ENCODE measurements at regions of chr7 and their contacts with region 1.

Region 1: GRCh38 chr7:150404805-150405583 is 25.9 kb downstream of the ZNF775 start:
- DNase-seq: peak; percentile 80
- ATAC-seq: peak; percentile 21
- H3K4me3 Mint-ChIP-seq: peak overlapping the region; percentile 76
- H3K27ac Mint-ChIP-seq: peak overlapping the region; percentile 99
- H3K4me1 Mint-ChIP-seq: peaks cover 65% of the 10 kb centered on the region
- H3K27me3 Mint-ChIP-seq: no peaks in the 10 kb centered on the region
- CTCF ChIP-seq: no peak

Region 2: DNA sequence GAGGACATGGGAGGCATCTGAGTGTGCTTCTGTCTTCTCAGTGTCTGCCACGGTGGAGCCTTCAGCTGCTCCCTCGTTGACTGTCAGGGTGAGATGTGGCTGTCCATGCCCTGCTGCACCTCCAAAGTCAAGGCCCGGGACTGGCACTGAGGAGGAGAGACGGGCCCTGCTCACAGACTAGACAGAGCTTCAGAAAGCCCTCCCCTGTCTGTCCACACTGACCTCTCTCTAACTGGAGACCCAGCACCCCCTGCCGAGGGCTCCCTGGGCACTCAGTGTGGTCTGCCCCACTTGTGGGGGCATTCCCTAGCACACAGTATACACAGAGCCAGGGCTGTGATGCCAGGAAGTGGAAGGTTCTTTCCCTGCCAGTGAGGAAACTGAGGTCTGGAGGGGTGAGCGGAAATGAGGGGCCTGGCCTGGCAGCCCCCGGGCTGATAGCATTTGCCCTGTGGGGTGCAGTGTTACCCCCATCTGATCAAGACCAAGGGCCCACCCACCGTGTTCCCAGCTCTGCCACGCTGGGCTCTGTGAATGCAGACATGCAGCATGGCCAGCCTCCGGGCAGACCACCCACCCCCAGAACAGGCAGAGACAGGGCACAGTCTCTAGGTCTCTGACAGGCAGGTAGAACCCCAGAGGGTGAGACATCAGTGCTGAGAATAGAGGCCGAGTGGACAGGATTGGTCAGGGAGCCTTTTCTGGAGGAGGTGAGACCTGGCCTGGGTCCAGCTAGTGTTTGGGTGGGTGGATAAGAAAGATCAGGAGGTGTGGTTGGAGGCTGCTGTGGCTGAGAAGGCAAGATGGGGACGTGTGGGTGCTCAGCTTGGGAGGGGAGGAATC is 577.9 kb before region 1 on chr7:
- CTCF ChIA-PET with region 1: no interaction called
- POLR2A ChIA-PET with region 1: no interaction called
- DNase-seq: peak; percentile 7
- ATAC-seq: no peak
- H3K4me3 Mint-ChIP-seq: no peak overlapping the region
- H3K27ac Mint-ChIP-seq: no peak overlapping the region
- H3K4me1 Mint-ChIP-seq: peaks cover 10% of the 10 kb centered on the region
- H3K27me3 Mint-ChIP-seq: no peaks in the 10 kb centered on the region; the same call in none of the 2 replicates
- CTCF ChIP-seq: no peak

Region 3: DNA sequence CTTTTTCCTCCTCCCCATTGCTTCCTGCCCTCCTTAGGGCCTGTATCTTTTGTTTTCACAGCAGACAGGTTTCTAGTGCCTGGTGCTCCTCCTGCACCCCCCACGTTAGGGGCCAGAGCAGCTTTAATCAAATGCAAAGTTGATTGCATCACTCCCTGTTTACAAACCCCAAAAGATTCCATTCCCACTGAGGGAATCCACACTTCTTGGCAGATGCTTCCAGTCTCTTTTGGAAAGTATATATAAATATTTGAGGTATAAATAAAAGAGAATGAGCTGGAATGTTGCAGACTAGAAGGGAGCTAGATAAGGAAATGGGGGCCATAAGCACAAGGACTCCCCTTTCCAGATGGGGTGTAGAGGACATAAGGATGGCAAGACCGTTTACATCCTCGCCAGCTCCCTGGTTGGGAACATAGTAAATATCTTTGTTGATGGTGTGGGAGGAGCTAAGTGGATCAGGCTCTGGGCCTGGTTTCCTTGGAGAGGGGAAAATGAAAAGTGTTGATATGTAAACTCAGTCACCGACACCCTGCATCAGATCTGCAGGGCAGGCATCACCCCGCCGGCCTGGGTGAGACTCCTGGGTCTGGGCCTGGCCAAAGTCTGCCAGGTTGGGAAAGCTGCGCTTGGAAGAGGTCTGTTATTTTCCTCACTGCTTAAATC is 69.8 kb before region 1 on chr7:
- CTCF ChIA-PET with region 1: no interaction called
- POLR2A ChIA-PET with region 1: interaction called, 10 read pairs
- DNase-seq: peak; percentile 64
- ATAC-seq: peak; percentile 69
- H3K4me3 Mint-ChIP-seq: no peak overlapping the region
- H3K27ac Mint-ChIP-seq: peak overlapping the region; percentile 97
- H3K4me1 Mint-ChIP-seq: peaks cover 77% of the 10 kb centered on the region
- H3K27me3 Mint-ChIP-seq: no peaks in the 10 kb centered on the region
- CTCF ChIP-seq: no peak

Region 4: GRCh38 chr7:150368096-150368883 is 36.7 kb before region 1 on chr7 and contains the start of gene REPIN1:
- CTCF ChIA-PET with region 1: interaction called, 7 read pairs
- POLR2A ChIA-PET with region 1: interaction called, 29 read pairs
- DNase-seq: peak; percentile 86
- ATAC-seq: peak; percentile 55
- H3K4me3 Mint-ChIP-seq: peak within 1 kb of the TSS; percentile 91
- H3K27ac Mint-ChIP-seq: peak within 1 kb of the TSS; percentile 99
- H3K4me1 Mint-ChIP-seq: peaks cover 52% of the 10 kb centered on the region
- H3K27me3 Mint-ChIP-seq: no peaks in the 10 kb centered on the region
- CTCF ChIP-seq: no peak
- total RNA-seq, gene REPIN1: 105 to 130 TPM (median 112 TPM) in 3 replicates

Region 5: GRCh38 chr7:150378853-150379440 is 26.0 kb before region 1 on chr7 and contains the start of gene ZNF775:
- CTCF ChIA-PET with region 1: interaction called, 33 read pairs
- POLR2A ChIA-PET with region 1: interaction called, 50 read pairs
- DNase-seq: peak; percentile 96
- ATAC-seq: peak; percentile 72
- H3K4me3 Mint-ChIP-seq: peak within 1 kb of the TSS; percentile 87
- H3K27ac Mint-ChIP-seq: peak within 1 kb of the TSS; percentile 95
- H3K4me1 Mint-ChIP-seq: peaks cover 81% of the 10 kb centered on the region
- H3K27me3 Mint-ChIP-seq: no peaks in the 10 kb centered on the region
- CTCF ChIP-seq: no peak
- total RNA-seq, gene ZNF775: 24.1 to 26.6 TPM (median 25.4 TPM) in 3 replicates